Ascending aorta (tissue), 2 donors: ENCODE measurements at regions of chr5 and their contacts with region 1.

Region 1: DNA sequence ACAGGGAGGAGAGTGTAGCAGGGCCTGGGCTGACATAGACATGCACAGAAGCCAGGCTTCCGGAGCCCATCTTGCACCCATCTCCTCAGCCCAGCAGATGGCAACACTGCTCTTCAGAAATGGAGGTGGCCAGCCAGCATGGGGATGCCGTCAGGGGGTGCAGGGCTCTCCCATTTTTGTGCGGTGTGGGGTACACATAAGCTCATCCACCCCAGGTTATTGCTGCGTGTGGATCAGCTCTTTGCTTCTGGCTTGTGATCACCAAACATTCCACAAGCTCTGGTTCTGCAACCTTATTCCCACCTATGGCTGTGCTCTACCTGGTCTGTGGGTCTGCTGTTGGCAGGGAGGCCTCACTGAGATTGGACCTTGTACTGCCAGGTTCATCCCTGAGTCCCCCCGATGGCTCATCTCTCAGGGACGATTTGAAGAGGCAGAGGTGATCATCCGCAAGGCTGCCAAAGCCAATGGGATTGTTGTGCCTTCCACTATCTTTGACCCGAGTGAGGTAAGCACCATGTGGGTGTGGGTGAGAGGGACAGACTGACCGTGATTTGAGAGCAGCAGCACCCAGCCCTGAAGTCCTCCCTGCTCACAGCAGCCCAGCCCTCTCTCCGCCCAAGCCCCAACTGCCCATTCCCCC is 17.3 kb downstream of the SLC22A5 start:
- DNase-seq: peak in 1 of 2 donors; percentile 86
- H3K4me3 ChIP-seq: no peak overlapping the region
- H3K27ac ChIP-seq: peak overlapping the region; percentile 84 to 95
- H3K4me1 ChIP-seq: peaks cover 31 to 48% of the 10 kb centered on the region in 2 donors
- H3K27me3 ChIP-seq: no peaks in the 10 kb centered on the region
- CTCF ChIP-seq: peak; percentile 77 to 83 (median 79)

Region 2: DNA sequence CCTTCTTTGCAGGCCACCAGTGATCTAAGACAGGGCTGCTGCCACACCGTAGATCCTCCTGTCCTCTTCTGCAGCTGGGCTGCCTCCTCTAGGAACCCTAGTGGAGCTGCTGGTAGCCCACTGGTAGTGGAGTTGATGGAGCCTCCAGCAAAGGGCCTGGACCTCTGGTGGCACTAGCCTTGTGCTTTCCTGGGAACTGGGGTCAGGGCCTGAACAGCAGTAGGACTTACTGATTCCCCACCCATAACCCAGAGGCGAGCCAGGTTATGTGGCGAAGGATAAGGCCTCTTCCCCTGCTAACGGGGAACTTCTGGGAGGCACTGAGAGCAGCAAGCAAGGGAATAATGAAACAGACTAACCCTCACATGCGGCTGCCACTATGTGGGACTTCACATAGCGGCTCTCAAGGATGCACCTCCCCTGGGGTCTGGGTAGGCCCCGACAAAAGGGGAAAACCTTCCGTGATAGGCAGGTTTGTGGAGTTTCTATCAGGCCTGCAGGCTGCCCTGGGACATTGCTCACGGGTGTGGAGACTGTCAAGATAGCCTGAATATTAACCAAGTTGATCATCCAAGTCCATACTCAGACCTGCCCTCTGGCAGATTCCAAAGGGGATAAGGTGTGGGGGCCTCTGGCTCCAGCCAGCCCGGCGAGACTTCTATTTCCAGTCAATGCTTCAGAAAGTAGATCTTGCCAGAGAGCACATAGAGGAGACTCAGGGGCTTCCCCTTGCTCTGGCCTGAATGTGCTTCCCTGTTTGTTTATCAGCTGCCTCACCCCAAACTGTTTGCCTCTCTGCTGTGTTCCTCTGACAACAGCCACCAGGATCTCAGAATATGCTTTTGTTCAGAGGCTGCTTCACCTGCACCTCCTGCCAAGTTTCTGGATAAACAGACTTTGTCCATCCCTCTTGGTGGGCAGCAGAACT is 85.2 kb before region 1 on chr5:
- intact Hi-C with region 1: no loop called
- DNase-seq: peak in 1 of 2 donors; percentile 55
- H3K4me3 ChIP-seq: no peak overlapping the region
- H3K27ac ChIP-seq: no peak overlapping the region
- H3K4me1 ChIP-seq: peaks cover 0 to under 1% of the 10 kb centered on the region in 2 donors
- H3K27me3 ChIP-seq: no peaks in the 10 kb centered on the region
- CTCF ChIP-seq: no peak

Region 3: GRCh38 chr5:132419502-132420468 is 33.0 kb after region 1 on chr5:
- intact Hi-C with region 1: loop called (anchors 5 kb)
- DNase-seq: peak in 1 of 2 donors; percentile 78
- H3K4me3 ChIP-seq: no peak overlapping the region
- H3K27ac ChIP-seq: peak overlapping the region; percentile 75 to 76
- H3K4me1 ChIP-seq: peaks cover 19 to 68% of the 10 kb centered on the region in 2 donors
- H3K27me3 ChIP-seq: no peaks in the 10 kb centered on the region
- CTCF ChIP-seq: peak; percentile 80 to 82 (median 80)

Region 4: GRCh38 chr5:132495667-132496190 is 109.0 kb after region 1 on chr5:
- intact Hi-C with region 1: loop called (anchors 1 kb)
- DNase-seq: peak in 1 of 2 donors; percentile 92
- H3K4me3 ChIP-seq: peak overlapping the region; percentile 57 to 88
- H3K27ac ChIP-seq: peak overlapping the region; percentile 92 to 97
- H3K4me1 ChIP-seq: peaks cover 17 to 30% of the 10 kb centered on the region in 2 donors
- H3K27me3 ChIP-seq: no peaks in the 10 kb centered on the region
- CTCF ChIP-seq: no peak

Region 5: GRCh38 chr5:132556763-132557477 is 170.2 kb after region 1 on chr5 and contains the start of gene RAD50:
- intact Hi-C with region 1: loop called (anchors 1 kb)
- DNase-seq: peak; percentile 79 to 96
- H3K4me3 ChIP-seq: peak within 1 kb of the TSS; percentile 73 to 95
- H3K27ac ChIP-seq: peak within 1 kb of the TSS; percentile 72 to 95
- H3K4me1 ChIP-seq: peaks cover 7 to 11% of the 10 kb centered on the region in 2 donors
- H3K27me3 ChIP-seq: no peaks in the 10 kb centered on the region
- CTCF ChIP-seq: no peak
- total RNA-seq, gene RAD50: 29.4 TPM